PC-9 (cell line): ENCODE measurements at regions of chr15 and their contacts with region 1.

Region 1: GRCh38 chr15:41258706-41259471 is 27.8 kb downstream of the CHP1 start:
- DNase-seq: peak; percentile 47 to 96
- H3K4me3 ChIP-seq: peak overlapping the region; percentile 37
- H3K27ac ChIP-seq: peak overlapping the region; percentile 89
- H3K4me1 ChIP-seq: peaks cover 62% of the 10 kb centered on the region
- H3K27me3 ChIP-seq: no peaks in the 10 kb centered on the region
- CTCF ChIP-seq: no peak

Region 2: DNA sequence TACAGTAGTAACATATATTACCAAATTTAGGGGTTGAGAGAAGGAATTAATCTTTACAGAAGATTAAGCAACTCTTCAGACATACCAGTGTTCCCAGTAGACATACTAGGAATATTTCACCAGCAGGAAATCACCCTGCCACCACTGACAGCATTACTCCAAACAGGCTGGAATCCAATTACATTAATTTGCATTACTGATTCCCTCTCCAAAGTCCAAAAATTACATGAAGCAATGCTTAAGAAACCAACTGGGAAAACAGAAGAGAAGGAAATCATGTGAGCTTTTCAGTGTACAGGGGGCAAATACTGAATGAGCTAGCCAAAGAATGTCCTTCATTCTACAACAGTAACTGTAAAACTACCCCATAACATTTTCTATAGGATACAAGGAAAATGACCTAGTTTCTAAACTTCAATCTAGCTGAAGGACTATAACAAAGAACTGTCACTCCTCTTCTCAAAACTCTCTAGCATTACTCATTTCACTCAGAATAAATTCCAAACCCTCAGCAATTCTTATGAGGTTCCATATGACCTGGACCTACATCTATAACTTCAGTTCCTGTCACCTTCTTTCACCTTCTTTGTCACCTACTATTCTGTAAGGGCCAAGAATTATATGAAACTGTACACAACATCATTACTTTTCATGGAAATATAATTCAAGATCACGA is 215.5 kb before region 1 on chr15:
- CTCF ChIA-PET with region 1: no interaction called
- POLR2A ChIA-PET with region 1: no interaction called
- intact Hi-C with region 1: no loop called
- DNase-seq: no peak
- H3K4me3 ChIP-seq: no peak overlapping the region
- H3K27ac ChIP-seq: no peak overlapping the region
- H3K4me1 ChIP-seq: no peaks in the 10 kb centered on the region
- H3K27me3 ChIP-seq: no peaks in the 10 kb centered on the region
- CTCF ChIP-seq: no peak

Region 3: GRCh38 chr15:41276821-41277220 is 17.9 kb after region 1 on chr15:
- CTCF ChIA-PET with region 1: no interaction called
- POLR2A ChIA-PET with region 1: interaction called, 33 read pairs
- intact Hi-C with region 1: no loop called
- DNase-seq: peak; percentile 57 to 86
- H3K4me3 ChIP-seq: no peak overlapping the region
- H3K27ac ChIP-seq: peak overlapping the region; percentile 23; the same call in 1 of the 2 replicates
- H3K4me1 ChIP-seq: peaks cover 22% of the 10 kb centered on the region
- H3K27me3 ChIP-seq: no peaks in the 10 kb centered on the region
- CTCF ChIP-seq: no peak